MCF 10A (cell line): ENCODE measurements at regions of chr5 and their contacts with region 1.

Region 1: DNA sequence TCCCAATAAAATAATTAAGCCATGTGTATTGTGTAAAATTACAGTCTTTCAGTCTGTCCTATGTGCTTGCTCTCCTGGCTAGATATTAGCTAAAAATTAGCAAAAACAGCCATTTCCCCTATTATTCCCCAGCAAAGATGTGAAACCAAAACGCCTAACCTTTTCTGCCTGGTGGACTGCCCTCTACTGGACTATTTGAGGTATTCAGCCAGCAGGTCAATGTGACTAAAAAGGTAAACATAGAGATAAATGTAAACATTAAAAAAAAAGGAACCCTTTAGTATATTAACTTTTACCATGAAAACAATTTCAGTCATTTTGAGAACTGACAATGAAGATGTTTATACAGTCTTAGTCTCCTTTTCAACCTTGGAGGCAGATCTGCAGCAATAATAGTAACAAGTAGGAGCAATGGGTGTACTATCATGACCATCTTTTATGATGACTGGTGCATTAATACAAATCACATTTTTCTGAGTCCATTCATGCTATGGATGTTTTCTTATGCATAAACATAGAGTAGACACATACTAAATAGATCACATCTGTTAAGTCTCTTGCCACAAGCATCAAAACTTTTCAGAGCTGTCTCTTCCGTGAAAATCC is 10.1 kb downstream of the ATG12 start:
- DNase-seq: peak; percentile 63
- H3K4me3 Mint-ChIP-seq: no peak overlapping the region
- H3K27ac Mint-ChIP-seq: peak overlapping the region; percentile 19
- H3K4me1 Mint-ChIP-seq: peaks cover 7% of the 10 kb centered on the region
- H3K27me3 Mint-ChIP-seq: no peaks in the 10 kb centered on the region
- CTCF ChIP-seq: peak; percentile 62

Region 2: GRCh38 chr5:115625579-115626444 is 205.5 kb before region 1 on chr5 and contains the start of gene TMED7:
- CTCF ChIA-PET with region 1: interaction called, 14 read pairs
- POLR2A ChIA-PET with region 1: interaction called, 3 read pairs
- intact Hi-C with region 1: no loop called
- DNase-seq: peak; percentile 98
- H3K4me3 Mint-ChIP-seq: no peak within 1 kb of the TSS
- H3K27ac Mint-ChIP-seq: no peak within 1 kb of the TSS
- H3K4me1 Mint-ChIP-seq: peaks cover 5% of the 10 kb centered on the region
- H3K27me3 Mint-ChIP-seq: no peaks in the 10 kb centered on the region
- CTCF ChIP-seq: no peak
- total RNA-seq, gene TMED7: 96.1 and 115 TPM in 2 replicates

Region 3: DNA sequence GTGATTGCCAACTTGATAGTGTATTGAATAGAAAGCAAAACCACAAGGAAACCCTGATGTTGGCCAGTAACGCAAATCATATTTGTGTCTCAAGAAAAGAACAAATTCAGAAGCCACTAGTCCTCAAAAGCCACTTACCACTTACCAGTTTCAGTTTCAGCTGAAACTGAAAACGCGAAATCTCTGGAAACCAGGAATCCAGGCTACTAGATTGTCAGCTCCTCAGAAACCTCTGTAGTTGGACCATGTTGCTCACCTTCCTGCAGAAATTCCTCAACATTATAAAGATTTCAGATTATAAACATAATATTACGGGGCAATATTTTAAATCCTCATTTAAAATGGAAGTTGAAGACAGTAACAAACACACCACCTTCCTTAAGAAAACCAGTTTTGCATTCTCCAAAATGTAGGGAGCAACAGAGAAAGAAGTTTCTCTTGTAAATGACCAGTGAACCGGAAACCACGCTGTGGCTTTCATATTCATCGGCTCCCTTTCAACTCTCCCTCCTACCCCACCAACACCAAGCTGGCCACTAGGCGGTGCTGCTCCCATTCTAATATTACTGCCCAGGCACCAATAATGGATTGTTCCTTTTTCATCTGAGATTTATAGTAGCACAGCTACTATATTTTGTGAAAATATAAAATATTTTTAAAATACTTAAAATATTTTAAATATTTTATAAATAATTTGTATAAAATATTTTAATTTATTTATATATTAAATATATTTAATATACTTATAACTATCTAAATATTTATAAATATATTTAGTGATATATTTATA is 196.7 kb before region 1 on chr5:
- CTCF ChIA-PET with region 1: interaction called, 54 read pairs
- POLR2A ChIA-PET with region 1: no interaction called
- intact Hi-C with region 1: loop called (anchors 1 kb)
- DNase-seq: peak; percentile 86
- H3K4me3 Mint-ChIP-seq: peak overlapping the region; percentile 56
- H3K27ac Mint-ChIP-seq: no peak overlapping the region
- H3K4me1 Mint-ChIP-seq: peaks cover 4% of the 10 kb centered on the region
- H3K27me3 Mint-ChIP-seq: no peaks in the 10 kb centered on the region
- CTCF ChIP-seq: peak; percentile 81

Region 4: GRCh38 chr5:115713408-115713807 is 117.9 kb before region 1 on chr5:
- CTCF ChIA-PET with region 1: no interaction called
- POLR2A ChIA-PET with region 1: no interaction called
- intact Hi-C with region 1: no loop called
- DNase-seq: no peak
- H3K4me3 Mint-ChIP-seq: no peak overlapping the region
- H3K27ac Mint-ChIP-seq: no peak overlapping the region
- H3K4me1 Mint-ChIP-seq: no peaks in the 10 kb centered on the region
- H3K27me3 Mint-ChIP-seq: no peaks in the 10 kb centered on the region
- CTCF ChIP-seq: no peak

Region 5: GRCh38 chr5:116291271-116291670 is 460.0 kb after region 1 on chr5:
- CTCF ChIA-PET with region 1: no interaction called
- POLR2A ChIA-PET with region 1: no interaction called
- intact Hi-C with region 1: no loop called
- DNase-seq: no peak
- H3K4me3 Mint-ChIP-seq: no peak overlapping the region
- H3K27ac Mint-ChIP-seq: no peak overlapping the region
- H3K4me1 Mint-ChIP-seq: peaks cover 5% of the 10 kb centered on the region
- H3K27me3 Mint-ChIP-seq: no peaks in the 10 kb centered on the region
- CTCF ChIP-seq: no peak